Spleen (tissue), 13 donors: ENCODE measurements at regions of chr1 and their contacts with region 1.

Region 1: DNA sequence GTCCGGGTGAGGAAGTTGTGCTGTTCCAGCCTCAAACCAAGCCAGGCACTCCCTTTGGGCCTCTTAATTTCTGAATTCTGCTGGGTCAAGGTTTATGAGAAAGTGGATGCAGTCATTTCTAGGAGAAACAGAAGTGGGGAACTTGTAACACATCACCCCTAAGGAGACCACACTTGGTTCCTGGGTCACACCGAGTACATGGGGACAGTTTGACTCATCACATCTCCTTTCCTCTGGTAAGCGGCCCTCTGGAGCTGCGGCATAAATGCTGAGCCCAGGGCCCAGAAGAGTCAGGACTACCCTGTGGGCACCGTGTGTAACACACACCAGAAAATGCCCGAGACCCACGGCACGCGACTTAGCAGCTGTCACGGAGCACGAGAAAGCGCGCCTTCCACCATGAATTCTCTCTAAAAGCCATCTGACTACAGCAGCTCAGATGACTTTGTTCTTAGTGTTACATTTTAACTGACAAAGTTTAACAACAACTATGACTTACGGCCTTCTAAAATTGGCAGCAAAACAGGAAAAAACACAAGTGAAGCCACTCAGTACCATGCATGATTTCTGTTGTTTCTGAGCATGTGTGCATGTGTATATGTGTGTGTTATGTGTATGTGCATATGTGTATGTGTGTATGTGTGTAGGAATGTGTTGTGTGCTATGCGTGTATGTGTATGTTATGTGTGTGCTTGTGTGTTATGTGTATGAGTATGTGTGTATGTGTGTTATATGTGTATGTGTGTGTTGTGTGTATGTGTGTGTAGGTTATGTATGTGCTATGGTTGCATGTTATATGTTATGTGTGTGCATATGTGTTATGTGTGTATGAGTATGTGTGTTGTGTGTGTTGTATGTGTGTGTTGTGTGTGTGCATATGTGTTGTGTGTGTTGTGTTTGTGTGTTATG is 50.8 kb downstream of the TOMM20 start:
- DNase-seq: peak; percentile 78
- H3K4me3 ChIP-seq: no peak overlapping the region
- H3K27ac ChIP-seq: peak overlapping the region in 7 of 8 donors; percentile 67 to 95 (median 81)
- H3K4me1 ChIP-seq: peaks cover 26 to 83% (median 49%) of the 10 kb centered on the region in 6 donors
- H3K27me3 ChIP-seq: no peaks in the 10 kb centered on the region
- CTCF ChIP-seq: no peak
- POLR2A ChIP-seq: no peak

Region 2: GRCh38 chr1:234309598-234310459 is 768.0 kb before region 1 on chr1:
- intact Hi-C with region 1: no loop called
- DNase-seq: peak; percentile 85
- H3K4me3 ChIP-seq: peak overlapping the region in 1 of 8 donors; percentile 5
- H3K27ac ChIP-seq: no peak overlapping the region
- H3K4me1 ChIP-seq: peaks cover 0 to 25% (median 8%) of the 10 kb centered on the region in 6 donors
- H3K27me3 ChIP-seq: peaks cover 0 to 3% (median 0%) of the 10 kb centered on the region in 7 donors
- CTCF ChIP-seq: peak; percentile 60 to 93 (median 81)
- POLR2A ChIP-seq: no peak

Region 3: DNA sequence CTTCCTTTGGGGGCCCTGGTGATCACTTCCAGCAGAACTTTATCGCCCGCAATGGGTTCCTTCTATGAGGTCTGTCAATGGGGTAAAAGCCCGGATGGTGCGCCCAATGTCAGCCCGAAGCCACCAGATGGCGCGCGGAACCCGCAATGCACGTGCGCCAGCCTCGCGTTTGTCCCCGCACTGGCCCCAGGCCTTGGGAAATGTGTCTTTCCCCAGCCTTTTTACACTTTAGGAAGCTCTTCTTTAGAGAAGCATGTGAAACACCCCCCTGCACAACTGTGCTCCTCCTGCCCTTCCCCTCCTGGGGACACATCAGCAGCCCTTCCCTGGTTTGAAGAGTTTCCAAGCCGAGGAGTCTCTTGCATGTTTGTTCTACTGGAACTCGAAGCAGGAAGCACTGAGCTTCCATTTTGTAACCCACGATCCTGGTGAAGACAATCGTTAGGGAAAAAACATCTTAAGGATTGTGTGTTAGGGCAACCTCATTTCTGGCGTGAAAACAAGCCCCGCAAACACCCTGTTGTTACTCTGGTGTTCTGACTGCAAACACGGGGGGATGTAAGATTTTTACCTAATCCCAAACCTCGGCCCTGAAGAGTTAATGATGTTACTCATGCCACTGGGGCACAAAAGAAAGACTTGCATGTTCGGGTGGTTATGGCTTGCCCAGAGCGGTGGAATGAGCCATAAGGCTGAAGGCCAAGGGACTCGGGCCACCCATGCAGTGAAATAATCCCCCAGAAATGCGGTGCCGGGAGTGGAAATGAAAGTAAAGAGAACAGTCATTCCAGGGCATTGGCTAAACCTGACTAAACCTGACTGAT is 578.5 kb before region 1 on chr1:
- intact Hi-C with region 1: loop called (anchors 2 kb)
- DNase-seq: peak; percentile 96
- H3K4me3 ChIP-seq: peak overlapping the region in 2 of 8 donors; percentile 3 to 49
- H3K27ac ChIP-seq: peak overlapping the region in 7 of 8 donors; percentile 61 to 81 (median 73)
- H3K4me1 ChIP-seq: peaks cover 6 to 31% (median 23%) of the 10 kb centered on the region in 6 donors
- H3K27me3 ChIP-seq: no peaks in the 10 kb centered on the region
- CTCF ChIP-seq: peak; percentile 81 to 95 (median 93)
- POLR2A ChIP-seq: no peak

Region 4: GRCh38 chr1:234599617-234600417 is 478.0 kb before region 1 on chr1:
- intact Hi-C with region 1: loop called (anchors 5 kb)
- DNase-seq: peak; percentile 95
- H3K4me3 ChIP-seq: peak overlapping the region; percentile 50 to 72 (median 58)
- H3K27ac ChIP-seq: peak overlapping the region; percentile 91 to 100 (median 100)
- H3K4me1 ChIP-seq: peaks cover 56 to 71% (median 63%) of the 10 kb centered on the region in 6 donors
- H3K27me3 ChIP-seq: no peaks in the 10 kb centered on the region
- CTCF ChIP-seq: peak in 3 of 11 experiments; percentile 6 to 35 (median 12)
- POLR2A ChIP-seq: peak in 2 of 3 donors; percentile 22 to 78

Region 5: GRCh38 chr1:234980645-234981396 is 97.0 kb before region 1 on chr1:
- intact Hi-C with region 1: loop called (anchors 10 kb)
- DNase-seq: peak; percentile 91
- H3K4me3 ChIP-seq: peak overlapping the region in 3 of 8 donors; percentile 1 to 58 (median 6)
- H3K27ac ChIP-seq: peak overlapping the region; percentile 84 to 96 (median 93)
- H3K4me1 ChIP-seq: peaks cover 40 to 100% (median 83%) of the 10 kb centered on the region in 6 donors
- H3K27me3 ChIP-seq: no peaks in the 10 kb centered on the region
- CTCF ChIP-seq: peak in 2 of 11 experiments; percentile 14 to 20
- POLR2A ChIP-seq: peak in 1 of 3 donors; percentile 29